ENCODE measurements at regions of chr5 and their contacts with region 1.

Region 1: GRCh38 chr5:11588803-11589202 is 315.4 kb downstream of the CTNND2 start:
- DNase-seq: no peak
- ATAC-seq: no peak
- H3K4me3 ChIP-seq: no peak overlapping the region
- H3K27ac ChIP-seq: no peak overlapping the region
- H3K4me1 ChIP-seq: no peaks in the 10 kb centered on the region
- H3K27me3 ChIP-seq: no peaks in the 10 kb centered on the region
- CTCF ChIP-seq: no peak
- POLR2A ChIP-seq: no peak
- RAD21 ChIP-seq: no peak

Region 2: DNA sequence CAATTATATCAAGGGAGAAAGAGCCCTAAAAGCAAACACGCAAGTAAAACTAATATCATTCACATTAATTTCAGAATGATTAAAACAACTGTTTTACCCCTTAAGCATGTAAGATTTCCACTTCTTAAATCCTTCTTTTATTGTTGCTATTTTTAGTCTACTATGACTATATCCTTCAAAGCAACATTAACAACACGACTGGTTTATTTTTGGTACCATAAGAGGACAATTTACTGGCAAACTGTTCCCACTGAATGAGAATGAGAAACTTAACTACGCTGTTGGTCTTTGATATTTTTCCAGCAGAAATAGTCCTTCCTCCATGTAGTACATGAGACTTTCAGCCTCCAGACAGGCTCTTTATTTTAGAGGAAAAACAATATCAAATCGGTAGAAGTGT is 34.0 kb after region 1 on chr5:
- CTCF ChIA-PET with region 1: no interaction called
- POLR2A ChIA-PET with region 1: no interaction called
- RAD21 ChIA-PET with region 1: no interaction called
- intact Hi-C with region 1: loop called (anchors 1 kb)
- DNase-seq: no peak
- ATAC-seq: no peak
- H3K4me3 ChIP-seq: no peak overlapping the region
- H3K27ac ChIP-seq: no peak overlapping the region
- H3K4me1 ChIP-seq: no peaks in the 10 kb centered on the region
- H3K27me3 ChIP-seq: no peaks in the 10 kb centered on the region
- CTCF ChIP-seq: no peak
- POLR2A ChIP-seq: no peak
- RAD21 ChIP-seq: no peak

Region 3: DNA sequence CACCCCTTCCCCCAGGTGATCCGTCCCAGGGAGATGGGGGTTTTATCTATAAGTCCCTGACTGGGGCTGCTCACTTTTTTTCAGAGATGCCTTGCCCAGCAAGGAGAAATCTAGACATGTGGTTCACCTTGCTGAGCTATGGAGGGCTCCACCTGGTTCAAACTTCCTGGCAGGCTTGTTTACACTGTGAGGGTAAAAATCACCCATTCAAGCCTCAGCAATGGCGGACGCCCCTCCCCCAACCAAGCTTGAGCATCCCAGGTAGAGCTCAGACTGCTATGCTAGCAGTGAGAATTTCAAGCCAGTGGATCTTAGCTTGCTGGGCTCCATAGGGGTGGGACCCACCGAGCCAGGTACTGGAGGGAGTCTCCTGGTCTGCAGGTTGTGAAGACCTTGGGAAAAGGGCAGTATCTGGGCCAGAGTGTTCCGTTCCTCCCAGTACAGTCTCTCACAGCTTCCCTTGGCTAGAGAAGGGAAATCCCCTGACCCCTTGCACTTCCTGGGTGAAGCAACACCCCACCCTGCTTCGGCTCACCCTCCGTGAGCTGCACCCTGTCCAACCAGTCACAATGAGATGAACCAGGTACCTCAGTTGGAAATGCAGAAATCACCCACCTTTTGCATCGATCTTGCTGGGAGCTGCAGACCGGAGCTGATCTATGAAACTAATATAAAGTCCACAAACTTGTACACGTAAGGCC is 83.7 kb after region 1 on chr5:
- CTCF ChIA-PET with region 1: no interaction called
- POLR2A ChIA-PET with region 1: no interaction called
- RAD21 ChIA-PET with region 1: no interaction called
- intact Hi-C with region 1: no loop called
- DNase-seq: no peak
- ATAC-seq: no peak
- H3K4me3 ChIP-seq: no peak overlapping the region
- H3K27ac ChIP-seq: no peak overlapping the region
- H3K4me1 ChIP-seq: no peaks in the 10 kb centered on the region
- H3K27me3 ChIP-seq: no peaks in the 10 kb centered on the region
- CTCF ChIP-seq: no peak
- POLR2A ChIP-seq: no peak
- RAD21 ChIP-seq: no peak

Measured in HCT116 (cell line).